Uterus (tissue), 4 donors: ENCODE measurements at regions of chr5 and their contacts with region 1.

Region 1: GRCh38 chr5:158174918-158175851 is 316.2 kb upstream of the CLINT1 start:
- DNase-seq: peak; percentile 84 to 85
- H3K4me3 ChIP-seq: no peak overlapping the region
- H3K27ac ChIP-seq: peak overlapping the region; percentile 60 to 71
- H3K4me1 ChIP-seq: peaks cover 0 to 3% of the 10 kb centered on the region in 2 donors
- H3K27me3 ChIP-seq: no peaks in the 10 kb centered on the region
- CTCF ChIP-seq: peak; percentile 79 to 88 (median 83)
- POLR2A ChIP-seq: no peak

Region 2: DNA sequence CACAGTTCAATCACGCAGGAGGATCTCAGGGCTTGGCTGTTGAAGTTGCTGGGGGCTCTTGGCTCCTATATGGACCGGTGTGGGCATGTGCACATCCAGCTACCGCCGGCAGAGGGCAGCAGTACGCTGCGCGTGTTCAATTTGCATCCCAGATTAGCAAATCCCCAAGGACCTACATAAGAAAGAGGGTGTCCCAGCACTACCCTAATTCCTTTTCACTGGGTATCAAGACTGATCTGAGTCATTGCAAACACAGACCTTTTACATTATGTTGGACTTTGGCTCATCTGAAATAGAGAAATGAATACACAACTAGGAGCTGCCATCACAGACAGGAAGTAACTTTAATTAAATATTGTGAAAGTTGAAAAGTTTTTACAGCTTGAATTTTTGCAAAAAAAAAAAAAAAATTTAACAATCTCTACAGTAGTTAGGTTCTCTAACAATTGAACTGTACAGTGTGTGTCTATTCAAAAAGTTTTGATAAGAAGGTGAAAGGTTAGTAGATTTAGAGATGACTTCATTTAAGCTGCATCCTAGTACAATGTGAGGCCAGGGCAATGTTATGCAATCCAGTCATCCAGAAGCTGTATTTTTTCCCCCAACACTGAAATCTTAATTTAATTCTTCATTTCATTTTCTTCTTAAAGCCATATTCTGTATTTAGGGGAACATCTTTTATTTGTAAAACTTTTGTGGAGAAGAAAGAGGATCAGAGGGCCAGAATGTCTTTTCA is 520.6 kb after region 1 on chr5:
- intact Hi-C with region 1: loop called (anchors 10 kb)
- DNase-seq: peak; percentile 76 to 80
- H3K4me3 ChIP-seq: no peak overlapping the region
- H3K27ac ChIP-seq: peak overlapping the region; percentile 30 to 64
- H3K4me1 ChIP-seq: peaks cover 6 to 15% of the 10 kb centered on the region in 2 donors
- H3K27me3 ChIP-seq: no peaks in the 10 kb centered on the region
- CTCF ChIP-seq: peak; percentile 92 to 97 (median 95)
- POLR2A ChIP-seq: no peak

Region 3: GRCh38 chr5:159106569-159107282 is 931.5 kb after region 1 on chr5:
- intact Hi-C with region 1: loop called (anchors 5 kb)
- DNase-seq: peak; percentile 77 to 83
- H3K4me3 ChIP-seq: peak overlapping the region; percentile 22 to 25
- H3K27ac ChIP-seq: peak overlapping the region; percentile 36 to 51
- H3K4me1 ChIP-seq: no peaks in the 10 kb centered on the region
- H3K27me3 ChIP-seq: no peaks in the 10 kb centered on the region
- CTCF ChIP-seq: peak; percentile 86 to 95 (median 93)
- POLR2A ChIP-seq: no peak